Gastrocnemius medialis (tissue), 4 donors: ENCODE measurements at regions of chr7 and their contacts with region 1.

Region 1: DNA sequence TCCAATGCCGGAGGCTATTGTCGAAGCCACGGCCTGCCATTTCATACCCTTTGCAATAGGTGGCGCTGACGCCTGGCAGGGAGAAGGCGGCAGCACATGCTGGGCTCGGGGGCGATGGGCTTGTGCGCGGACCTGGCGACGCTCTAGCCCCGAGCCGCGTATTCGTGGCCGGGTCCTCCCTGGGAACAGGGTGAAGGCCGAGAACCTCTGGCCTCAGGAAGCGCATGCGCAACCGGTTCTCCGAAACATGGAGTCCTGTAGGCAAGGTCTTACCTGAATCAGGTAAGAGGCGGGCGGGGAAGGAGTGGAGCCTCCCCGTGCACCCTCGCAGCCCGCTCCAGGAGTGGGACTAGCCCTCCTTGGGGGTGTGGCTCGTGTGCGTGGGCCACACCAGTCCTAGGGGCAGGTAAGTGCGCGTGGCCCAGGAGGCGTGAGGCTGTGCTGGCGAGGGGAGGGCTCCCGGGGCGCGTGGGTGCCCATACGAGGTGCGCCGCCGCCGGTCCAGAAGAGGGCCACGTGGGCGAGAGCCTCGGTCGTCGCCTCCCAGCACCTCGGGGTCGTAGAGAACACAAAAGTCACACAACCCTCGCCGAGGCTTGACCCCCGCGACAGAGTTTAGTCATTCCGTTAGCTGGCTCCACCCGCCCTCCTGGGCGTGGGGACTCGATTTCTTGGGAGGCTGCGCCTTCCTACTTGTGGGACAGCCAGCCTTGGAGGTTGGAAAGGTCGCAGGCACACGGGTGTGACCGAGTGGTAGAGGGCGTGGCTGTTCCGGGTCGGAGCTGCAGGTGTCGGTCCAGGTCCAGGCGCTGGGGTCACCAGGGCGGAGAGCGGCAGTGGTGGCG is 5.5 kb upstream of the MEST start:
- DNase-seq: no peak
- ATAC-seq: no peak
- H3K4me3 ChIP-seq: peak overlapping the region; percentile 31 to 50 (median 38)
- H3K27ac ChIP-seq: no peak overlapping the region
- H3K4me1 ChIP-seq: peaks cover under 1% of the 10 kb centered on the region in 2 donors
- H3K27me3 ChIP-seq: peaks cover 5 to 59% (median 24%) of the 10 kb centered on the region in 3 donors
- CTCF ChIP-seq: peak in 2 of 5 experiments; percentile 46 to 48
- POLR2A ChIP-seq: no peak

Region 2: GRCh38 chr7:130721486-130722280 is 235.3 kb after region 1 on chr7:
- in situ Hi-C with region 1: no loop called
- intact Hi-C with region 1: loop called (anchors 10 kb)
- DNase-seq: peak; percentile 34 to 48
- ATAC-seq: peak; percentile 46 to 69
- H3K4me3 ChIP-seq: no peak overlapping the region
- H3K27ac ChIP-seq: no peak overlapping the region
- H3K4me1 ChIP-seq: no peaks in the 10 kb centered on the region
- H3K27me3 ChIP-seq: no peaks in the 10 kb centered on the region
- CTCF ChIP-seq: peak in 4 of 5 experiments; percentile 35 to 66 (median 52)
- POLR2A ChIP-seq: no peak